Prostate gland (tissue), 2 donors: ENCODE measurements at regions of chr22 and their contacts with region 1.

Region 1: GRCh38 chr22:23838681-23839468 is at the start of gene DERL3:
- DNase-seq: peak; percentile 94
- H3K4me3 ChIP-seq: peak within 1 kb of the TSS; percentile 15 to 32
- H3K27ac ChIP-seq: no peak within 1 kb of the TSS
- H3K4me1 ChIP-seq: peaks cover 10% of the 10 kb centered on the region
- H3K27me3 ChIP-seq: no peaks in the 10 kb centered on the region
- CTCF ChIP-seq: no peak
- POLR2A ChIP-seq: no peak
- total RNA-seq, gene DERL3: 6.9 TPM in 1 of 2 donors, not detected in the other

Region 2: DNA sequence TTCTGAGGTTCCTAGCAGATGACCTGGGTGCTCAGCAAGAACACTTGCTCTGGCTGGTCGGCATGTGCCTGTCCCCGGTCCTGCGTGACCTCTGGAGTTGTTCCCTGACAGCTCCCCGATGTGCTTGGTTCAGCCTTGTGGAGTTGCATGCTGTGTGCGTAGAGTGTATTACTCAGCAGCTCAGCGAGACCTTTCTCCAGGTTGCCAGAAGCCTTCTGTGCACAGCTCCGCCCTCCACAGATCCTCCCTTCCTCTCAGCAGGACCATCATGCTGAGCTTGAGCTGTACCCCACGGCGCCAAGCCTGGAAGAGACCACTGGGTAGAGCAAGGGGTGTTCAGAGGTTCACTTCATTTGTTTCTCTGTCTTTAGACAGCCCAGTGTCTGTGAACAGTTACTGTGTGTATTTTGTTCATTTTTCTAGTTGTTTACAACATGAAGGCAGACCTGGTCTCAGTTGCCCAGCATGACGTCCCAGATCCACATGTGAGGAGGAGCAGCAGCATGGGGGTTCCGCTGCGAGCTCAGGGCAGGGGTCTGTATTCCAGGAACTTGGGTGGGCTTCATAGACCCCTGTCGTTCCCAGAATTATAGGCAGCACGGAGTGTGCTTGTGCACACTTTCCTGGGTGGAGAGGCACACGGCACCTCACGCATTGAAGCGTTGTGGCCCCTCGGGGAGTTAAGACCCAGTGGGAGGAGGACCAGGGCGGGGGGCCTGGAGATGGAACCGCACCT is 407.4 kb before region 1 on chr22:
- intact Hi-C with region 1: loop called (anchors 10 kb)
- DNase-seq: no peak
- H3K4me3 ChIP-seq: no peak overlapping the region
- H3K27ac ChIP-seq: no peak overlapping the region
- H3K4me1 ChIP-seq: no peaks in the 10 kb centered on the region
- H3K27me3 ChIP-seq: no peaks in the 10 kb centered on the region
- CTCF ChIP-seq: no peak
- POLR2A ChIP-seq: no peak

Region 3: GRCh38 chr22:23767673-23768548 is 71.0 kb before region 1 on chr22 and contains the start of gene CHCHD10:
- intact Hi-C with region 1: loop called (anchors 2 kb)
- DNase-seq: peak; percentile 81
- H3K4me3 ChIP-seq: peak within 1 kb of the TSS; percentile 54 to 59
- H3K27ac ChIP-seq: peak within 1 kb of the TSS; percentile 78 to 84
- H3K4me1 ChIP-seq: peaks cover 6% of the 10 kb centered on the region
- H3K27me3 ChIP-seq: no peaks in the 10 kb centered on the region
- CTCF ChIP-seq: peak; percentile 64 to 86 (median 78)
- POLR2A ChIP-seq: peak; percentile 83
- total RNA-seq, gene CHCHD10: 17.3 to 59.3 TPM